Endothelial cell of umbilical vein (primary cell): ENCODE measurements at regions of chr12 and their contacts with region 1.

Region 1: GRCh38 chr12:50314629-50315312 is 31.5 kb upstream of the LIMA1 start:
- DNase-seq: peak; percentile 70
- H3K4me3 ChIP-seq: no peak overlapping the region
- H3K27ac ChIP-seq: no peak overlapping the region
- H3K4me1 ChIP-seq: no peaks in the 10 kb centered on the region
- H3K27me3 ChIP-seq: no peaks in the 10 kb centered on the region
- CTCF ChIP-seq: peak; percentile 50 to 68
- POLR2A ChIP-seq: no peak

Region 2: DNA sequence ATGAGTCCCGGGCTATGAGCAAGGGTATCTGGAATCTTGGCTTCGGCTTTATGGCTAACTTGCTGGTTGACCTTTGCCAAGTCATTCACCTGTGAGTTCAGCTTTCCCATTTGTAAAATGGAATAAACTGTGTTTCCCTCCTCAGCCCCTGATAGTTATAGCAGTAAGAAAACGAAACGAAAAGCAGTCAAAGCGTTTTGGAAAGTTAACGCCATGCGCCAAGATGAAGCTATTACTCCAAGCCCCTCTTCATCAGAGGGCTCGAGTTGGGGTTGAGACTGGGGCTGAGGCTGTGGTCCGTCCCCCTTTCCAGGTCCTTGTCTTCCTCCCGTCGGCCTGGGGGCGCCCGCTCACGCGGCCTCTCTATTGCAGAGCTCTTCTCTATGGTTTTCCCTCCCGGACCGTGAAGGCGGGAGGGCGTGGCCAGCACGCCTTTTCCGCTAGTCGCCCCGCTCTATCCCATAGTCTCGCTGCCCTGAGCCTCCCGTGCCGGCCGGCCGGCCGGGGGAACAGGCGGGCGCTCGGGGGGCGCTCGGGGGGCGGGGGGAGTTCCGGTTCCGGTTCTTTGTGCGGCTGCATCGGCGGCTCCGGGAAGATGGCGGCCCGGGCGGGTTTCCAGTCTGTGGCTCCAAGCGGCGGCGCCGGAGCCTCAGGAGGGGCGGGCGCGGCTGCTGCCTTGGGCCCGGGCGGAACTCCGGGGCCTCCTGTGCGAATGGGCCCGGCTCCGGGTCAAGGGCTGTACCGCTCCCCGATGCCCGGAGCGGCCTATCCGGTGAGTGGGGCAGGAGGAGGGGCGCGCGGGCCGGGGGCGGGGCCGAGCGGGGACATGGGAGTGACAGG is 229.8 kb before region 1 on chr12 and contains the start of gene SMARCD1:
- CTCF ChIA-PET with region 1: interaction called, 10 read pairs
- POLR2A ChIA-PET with region 1: interaction called, 3 read pairs
- dilution Hi-C with region 1: no loop called
- intact Hi-C with region 1: no loop called
- DNase-seq: peak; percentile 92
- H3K4me3 ChIP-seq: peak within 1 kb of the TSS; percentile 51 to 95 (median 80)
- H3K27ac ChIP-seq: peak within 1 kb of the TSS; percentile 72
- H3K4me1 ChIP-seq: peaks cover 35% of the 10 kb centered on the region
- H3K27me3 ChIP-seq: no peaks in the 10 kb centered on the region
- CTCF ChIP-seq: peak; percentile 50 to 71
- POLR2A ChIP-seq: no peak
- total RNA-seq, gene SMARCD1: 86.6 and 101 TPM in 2 replicates

Region 3: DNA sequence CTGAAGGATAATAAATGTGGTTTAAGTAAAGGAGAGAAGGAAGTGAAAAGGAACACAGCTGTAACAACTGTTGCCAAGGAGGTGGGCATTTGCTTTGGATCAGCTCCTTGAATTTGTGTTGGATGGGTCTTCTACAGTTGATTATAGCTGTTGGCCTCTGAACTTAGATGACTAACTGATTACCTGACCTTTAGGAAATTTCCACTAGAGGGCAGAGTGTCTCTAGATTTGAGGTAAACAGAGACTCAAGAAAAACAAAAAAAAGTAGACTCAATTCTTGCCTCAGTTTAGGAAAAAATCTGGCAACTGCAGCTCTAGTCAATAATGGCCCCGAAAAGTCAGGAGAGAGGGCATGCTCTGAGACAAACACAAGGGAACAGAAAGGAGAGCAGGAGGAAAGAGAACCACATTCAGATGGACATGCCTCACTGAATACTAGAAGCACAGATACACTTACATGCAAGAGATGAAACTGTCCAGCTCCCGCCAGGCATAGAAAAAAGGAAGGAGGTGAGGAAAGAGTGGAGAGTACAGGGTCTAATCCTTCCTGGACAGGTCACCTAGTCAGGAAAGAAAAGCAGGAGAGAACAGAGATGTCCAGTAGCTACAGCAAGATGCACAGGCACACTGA is 182.2 kb before region 1 on chr12:
- CTCF ChIA-PET with region 1: interaction called, 21 read pairs
- POLR2A ChIA-PET with region 1: no interaction called
- dilution Hi-C with region 1: no loop called
- intact Hi-C with region 1: loop called (anchors 1 kb)
- DNase-seq: no peak
- H3K4me3 ChIP-seq: no peak overlapping the region
- H3K27ac ChIP-seq: no peak overlapping the region
- H3K4me1 ChIP-seq: peaks cover 4% of the 10 kb centered on the region
- H3K27me3 ChIP-seq: no peaks in the 10 kb centered on the region
- CTCF ChIP-seq: peak in 1 of 2 donors; percentile 46
- POLR2A ChIP-seq: no peak

Region 4: DNA sequence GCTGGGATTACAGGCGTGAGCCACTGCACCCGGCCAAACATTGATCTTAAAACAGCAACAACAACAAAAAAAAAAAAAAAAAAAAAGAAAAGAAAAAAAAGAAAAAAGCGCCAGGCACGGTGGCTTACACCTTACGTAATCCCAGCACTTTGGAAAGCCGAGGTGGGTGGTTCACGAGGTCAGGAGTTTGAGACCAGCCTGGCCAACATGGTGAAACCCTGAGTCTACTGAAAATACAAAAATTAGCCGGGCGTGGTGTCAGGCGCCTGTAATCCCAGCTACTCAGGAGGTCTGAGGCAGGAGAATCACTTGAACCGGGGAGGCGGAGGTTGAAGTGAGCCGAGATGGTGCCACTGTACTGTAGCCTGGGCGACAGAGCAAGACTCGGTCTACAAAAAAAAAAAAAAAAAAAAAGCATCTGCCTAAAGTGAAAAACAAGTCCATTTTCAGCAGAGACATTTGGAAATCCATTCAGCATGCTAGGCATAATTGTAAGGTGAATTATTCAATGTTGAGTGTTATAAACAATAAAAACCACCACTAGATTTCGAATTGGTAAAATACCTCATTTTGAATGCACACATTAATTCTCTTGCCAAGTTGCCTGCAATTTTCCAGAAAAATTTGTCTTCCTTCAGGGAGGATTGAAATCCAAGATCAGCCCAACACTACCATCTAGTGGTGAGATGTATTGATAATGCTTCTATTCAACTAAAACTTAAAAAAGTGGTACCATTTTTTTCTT is 139.6 kb before region 1 on chr12:
- CTCF ChIA-PET with region 1: interaction called, 181 read pairs
- POLR2A ChIA-PET with region 1: no interaction called
- dilution Hi-C with region 1: no loop called
- intact Hi-C with region 1: loop called (anchors 1 kb)
- DNase-seq: peak; percentile 87
- H3K4me3 ChIP-seq: no peak overlapping the region
- H3K27ac ChIP-seq: no peak overlapping the region
- H3K4me1 ChIP-seq: no peaks in the 10 kb centered on the region
- H3K27me3 ChIP-seq: no peaks in the 10 kb centered on the region
- CTCF ChIP-seq: peak; percentile 27 to 38
- POLR2A ChIP-seq: no peak

Region 5: GRCh38 chr12:50222275-50222795 is 92.4 kb before region 1 on chr12:
- CTCF ChIA-PET with region 1: interaction called, 48 read pairs
- POLR2A ChIA-PET with region 1: no interaction called
- dilution Hi-C with region 1: no loop called
- intact Hi-C with region 1: no loop called
- DNase-seq: peak; percentile 89
- H3K4me3 ChIP-seq: peak overlapping the region; percentile 50 to 99 (median 96)
- H3K27ac ChIP-seq: peak overlapping the region; percentile 77
- H3K4me1 ChIP-seq: peaks cover 23% of the 10 kb centered on the region
- H3K27me3 ChIP-seq: no peaks in the 10 kb centered on the region
- CTCF ChIP-seq: peak in 1 of 2 donors; percentile 11
- POLR2A ChIP-seq: peak; percentile 80

Region 6: GRCh38 chr12:50302686-50303085 is 12.1 kb before region 1 on chr12:
- CTCF ChIA-PET with region 1: interaction called, 23 read pairs
- POLR2A ChIA-PET with region 1: no interaction called
- dilution Hi-C with region 1: no loop called
- intact Hi-C with region 1: no loop called
- DNase-seq: no peak
- H3K4me3 ChIP-seq: no peak overlapping the region
- H3K27ac ChIP-seq: no peak overlapping the region
- H3K4me1 ChIP-seq: no peaks in the 10 kb centered on the region
- H3K27me3 ChIP-seq: no peaks in the 10 kb centered on the region
- CTCF ChIP-seq: no peak
- POLR2A ChIP-seq: no peak

Region 7: DNA sequence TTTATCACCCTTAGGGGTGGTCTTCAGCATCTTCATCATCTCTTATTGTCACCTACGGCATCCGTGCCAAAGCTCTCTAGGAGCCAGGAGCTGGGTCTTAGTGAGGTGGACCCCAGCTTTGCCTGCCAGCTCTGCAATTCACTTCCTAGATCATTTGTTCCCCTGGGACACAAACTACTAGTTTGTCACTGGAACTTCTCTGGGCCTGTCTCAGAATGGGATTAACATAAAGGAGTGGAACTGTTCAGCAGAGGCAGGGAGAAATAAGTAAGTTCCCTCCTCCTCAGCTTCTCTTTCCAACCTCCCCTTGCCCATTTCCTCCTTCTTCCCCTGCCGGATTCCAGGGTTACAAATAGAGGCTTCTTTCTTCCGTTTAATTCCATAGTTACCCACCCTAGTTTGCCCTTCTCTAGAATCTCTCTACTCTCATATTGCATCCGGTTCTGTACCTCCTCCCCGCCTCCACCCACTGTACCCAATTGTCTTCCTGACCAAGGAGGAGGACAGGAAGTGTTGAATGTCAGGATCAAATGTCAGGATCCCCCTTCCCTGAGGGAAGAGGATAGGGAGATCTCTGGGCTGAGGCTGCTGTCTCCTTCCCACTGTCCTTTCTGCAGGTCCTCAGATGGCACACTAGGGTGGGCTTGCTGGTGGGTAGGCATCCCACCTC is 111.0 kb after region 1 on chr12:
- CTCF ChIA-PET with region 1: no interaction called
- POLR2A ChIA-PET with region 1: no interaction called
- dilution Hi-C with region 1: no loop called
- intact Hi-C with region 1: no loop called
- DNase-seq: peak; percentile 5
- H3K4me3 ChIP-seq: no peak overlapping the region
- H3K27ac ChIP-seq: no peak overlapping the region
- H3K4me1 ChIP-seq: peaks cover 13% of the 10 kb centered on the region
- H3K27me3 ChIP-seq: no peaks in the 10 kb centered on the region
- CTCF ChIP-seq: no peak
- POLR2A ChIP-seq: no peak